AG04450 (cell line): ENCODE measurements at regions of chr2 and their contacts with region 1.

Region 1: DNA sequence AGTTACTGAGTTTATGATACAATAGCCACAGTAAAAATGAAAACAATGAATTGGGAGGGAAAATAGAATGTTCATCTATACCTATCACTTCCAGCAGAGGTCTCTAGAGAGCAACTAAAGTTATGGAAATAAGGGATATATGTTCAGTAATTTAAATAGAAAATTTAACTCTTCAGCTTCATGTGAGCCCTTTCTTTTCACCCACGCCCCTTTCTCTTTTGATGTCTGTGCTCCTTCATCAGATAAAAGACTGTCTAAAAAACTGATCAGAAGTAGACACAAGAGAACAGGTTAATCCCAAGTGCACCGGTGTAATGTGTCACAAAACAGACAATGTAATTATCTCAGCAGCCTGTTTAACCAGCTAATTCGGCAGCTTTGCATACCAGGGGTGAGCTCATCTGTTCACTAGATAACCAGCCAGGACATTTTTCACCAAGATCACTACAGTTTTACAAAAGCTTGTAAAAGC is 238.5 kb upstream of the ERBB4 start:
- DNase-seq: no peak
- H3K4me3 ChIP-seq: no peak overlapping the region
- H3K27ac ChIP-seq: no peak overlapping the region
- H3K27me3 ChIP-seq: no peaks in the 10 kb centered on the region
- CTCF ChIP-seq: peak; percentile 66

Region 2: DNA sequence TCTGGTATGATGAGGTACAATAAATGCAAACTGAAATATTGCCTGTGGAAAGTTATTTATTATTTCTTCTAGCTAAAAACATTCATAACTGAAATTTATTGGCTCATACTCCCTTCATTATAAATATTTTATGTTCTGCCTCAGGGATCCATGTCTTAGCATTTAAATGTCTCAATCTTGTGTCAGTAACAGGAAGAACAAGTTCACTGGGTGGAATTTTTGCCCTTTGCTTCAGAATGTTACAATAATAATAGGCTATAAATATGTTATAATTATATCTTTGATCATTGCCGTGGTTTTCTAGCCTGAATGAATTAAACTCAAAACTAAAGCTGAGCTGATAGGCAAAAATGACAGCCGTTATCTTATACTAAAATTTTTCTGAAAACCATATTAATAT is 41.0 kb after region 1 on chr2:
- CTCF ChIA-PET with region 1: no interaction called
- POLR2A ChIA-PET with region 1: no interaction called
- DNase-seq: no peak
- H3K4me3 ChIP-seq: no peak overlapping the region
- H3K27ac ChIP-seq: no peak overlapping the region
- H3K27me3 ChIP-seq: no peaks in the 10 kb centered on the region
- CTCF ChIP-seq: no peak

Region 3: GRCh38 chr2:213161759-213162515 is 384.9 kb after region 1 on chr2:
- CTCF ChIA-PET with region 1: interaction called, 11 read pairs
- POLR2A ChIA-PET with region 1: no interaction called
- DNase-seq: no peak
- H3K4me3 ChIP-seq: peak overlapping the region; percentile 5; the same call in 1 of the 2 replicates
- H3K27ac ChIP-seq: peak overlapping the region; percentile 77
- H3K27me3 ChIP-seq: no peaks in the 10 kb centered on the region
- CTCF ChIP-seq: no peak